ENCODE measurements at regions of chr14 and their contacts with region 1.

Region 1: GRCh38 chr14:93655078-93655750 is 133.1 kb downstream of the PRIMA1 start:
- DNase-seq: no peak
- H3K4me3 ChIP-seq: no peak overlapping the region
- H3K27me3 ChIP-seq: no peaks in the 10 kb centered on the region
- CTCF ChIP-seq: peak; percentile 42

Region 2: GRCh38 chr14:93431036-93431670 is 224.1 kb before region 1 on chr14:
- CTCF ChIA-PET with region 1: no interaction called
- POLR2A ChIA-PET with region 1: no interaction called
- DNase-seq: no peak
- H3K4me3 ChIP-seq: no peak overlapping the region
- H3K27me3 ChIP-seq: no peaks in the 10 kb centered on the region
- CTCF ChIP-seq: no peak

Region 3: DNA sequence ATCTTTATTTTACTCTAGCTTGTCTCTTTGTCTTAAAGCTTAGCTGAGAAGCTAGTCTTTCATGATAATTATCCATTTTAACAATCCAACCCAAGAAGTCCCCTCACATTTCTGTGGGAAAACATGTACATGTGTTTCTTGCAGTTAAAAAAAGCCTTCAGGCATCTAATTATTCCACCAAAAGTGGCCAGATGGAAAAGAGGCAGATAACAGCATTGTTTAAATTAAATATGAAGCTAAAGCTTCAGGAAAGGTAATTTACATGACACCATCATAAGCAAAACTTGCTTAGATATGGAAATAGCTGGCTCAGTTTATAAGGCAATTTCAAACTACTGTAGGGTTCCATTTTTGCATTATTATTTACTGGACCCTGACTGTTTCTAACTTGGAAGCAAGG is 49.1 kb before region 1 on chr14:
- CTCF ChIA-PET with region 1: no interaction called
- POLR2A ChIA-PET with region 1: no interaction called
- DNase-seq: no peak
- H3K4me3 ChIP-seq: no peak overlapping the region
- H3K27me3 ChIP-seq: no peaks in the 10 kb centered on the region
- CTCF ChIP-seq: no peak

Region 4: GRCh38 chr14:93892923-93893558 is 237.8 kb after region 1 on chr14:
- CTCF ChIA-PET with region 1: interaction called, 16 read pairs
- POLR2A ChIA-PET with region 1: no interaction called
- DNase-seq: no peak
- H3K4me3 ChIP-seq: no peak overlapping the region
- H3K27me3 ChIP-seq: no peaks in the 10 kb centered on the region
- CTCF ChIP-seq: peak; percentile 99

Region 5: GRCh38 chr14:93903342-93904184 is 248.3 kb after region 1 on chr14:
- CTCF ChIA-PET with region 1: interaction called, 10 read pairs
- POLR2A ChIA-PET with region 1: no interaction called
- DNase-seq: no peak
- H3K4me3 ChIP-seq: no peak overlapping the region
- H3K27me3 ChIP-seq: no peaks in the 10 kb centered on the region
- CTCF ChIP-seq: peak; percentile 18; the same call in 1 of the 2 replicates